ENCODE measurements at regions of chr1 and their contacts with region 1.

Region 1: GRCh38 chr1:41573785-41574713 is 89.6 kb upstream of the EDN2 start:
- DNase-seq: peak in 1 of 2 donors; percentile 85
- H3K4me3 ChIP-seq: no peak overlapping the region
- H3K27ac ChIP-seq: no peak overlapping the region
- H3K4me1 ChIP-seq: no peaks in the 10 kb centered on the region
- H3K27me3 ChIP-seq: no peaks in the 10 kb centered on the region
- CTCF ChIP-seq: peak; percentile 77 to 92 (median 84)

Region 2: DNA sequence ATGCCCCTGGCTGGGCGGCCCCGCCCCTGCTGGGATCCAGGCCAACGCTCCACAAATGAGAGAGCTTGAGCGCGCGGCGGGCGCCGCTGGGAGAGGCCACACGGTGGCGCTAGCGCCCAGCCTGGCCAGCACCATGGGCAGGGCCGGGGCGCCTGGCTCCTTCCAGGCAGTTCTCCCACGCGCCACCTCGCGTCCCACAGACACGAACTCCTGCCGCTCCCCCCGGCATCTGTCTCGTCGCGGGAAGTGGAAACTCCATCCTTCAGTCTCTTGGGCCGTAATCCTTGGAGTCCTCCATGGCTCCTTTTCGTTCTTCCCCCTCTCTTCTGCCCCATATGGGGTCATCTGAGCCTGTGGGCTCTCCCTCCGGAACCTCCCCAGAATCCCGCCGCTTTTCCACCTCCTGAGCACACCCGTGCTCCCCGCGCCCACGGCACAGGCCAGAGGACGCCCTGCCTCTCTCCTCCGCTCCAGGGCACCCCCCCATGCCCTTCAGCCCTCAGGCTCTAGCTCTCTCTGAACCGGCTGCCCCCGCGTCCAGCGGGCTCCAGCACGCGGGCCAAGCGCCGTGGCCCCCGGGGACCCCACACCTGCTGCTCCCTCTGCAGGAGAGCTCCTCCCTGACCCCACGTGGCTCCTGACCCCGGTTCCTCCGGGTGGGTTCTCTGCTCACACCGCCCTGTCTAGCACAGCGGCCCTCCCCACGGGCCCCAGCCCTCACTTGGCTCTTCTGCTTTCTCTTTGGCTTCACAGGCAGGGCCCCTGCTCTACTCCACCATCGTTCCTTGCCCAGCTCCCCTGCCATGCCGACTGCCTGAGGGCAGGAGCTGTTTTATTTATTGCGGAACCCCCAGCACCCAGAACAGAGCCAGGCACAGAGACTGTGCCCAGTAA is 57.6 kb before region 1 on chr1:
- intact Hi-C with region 1: loop called (anchors 2 kb)
- DNase-seq: peak; percentile 55 to 96
- H3K4me3 ChIP-seq: peak overlapping the region; percentile 40 to 69
- H3K27ac ChIP-seq: peak overlapping the region in 1 of 2 donors; percentile 40
- H3K4me1 ChIP-seq: peaks cover 3 to 7% of the 10 kb centered on the region in 2 donors
- H3K27me3 ChIP-seq: no peaks in the 10 kb centered on the region
- CTCF ChIP-seq: peak; percentile 88 to 96 (median 89)

Region 3: DNA sequence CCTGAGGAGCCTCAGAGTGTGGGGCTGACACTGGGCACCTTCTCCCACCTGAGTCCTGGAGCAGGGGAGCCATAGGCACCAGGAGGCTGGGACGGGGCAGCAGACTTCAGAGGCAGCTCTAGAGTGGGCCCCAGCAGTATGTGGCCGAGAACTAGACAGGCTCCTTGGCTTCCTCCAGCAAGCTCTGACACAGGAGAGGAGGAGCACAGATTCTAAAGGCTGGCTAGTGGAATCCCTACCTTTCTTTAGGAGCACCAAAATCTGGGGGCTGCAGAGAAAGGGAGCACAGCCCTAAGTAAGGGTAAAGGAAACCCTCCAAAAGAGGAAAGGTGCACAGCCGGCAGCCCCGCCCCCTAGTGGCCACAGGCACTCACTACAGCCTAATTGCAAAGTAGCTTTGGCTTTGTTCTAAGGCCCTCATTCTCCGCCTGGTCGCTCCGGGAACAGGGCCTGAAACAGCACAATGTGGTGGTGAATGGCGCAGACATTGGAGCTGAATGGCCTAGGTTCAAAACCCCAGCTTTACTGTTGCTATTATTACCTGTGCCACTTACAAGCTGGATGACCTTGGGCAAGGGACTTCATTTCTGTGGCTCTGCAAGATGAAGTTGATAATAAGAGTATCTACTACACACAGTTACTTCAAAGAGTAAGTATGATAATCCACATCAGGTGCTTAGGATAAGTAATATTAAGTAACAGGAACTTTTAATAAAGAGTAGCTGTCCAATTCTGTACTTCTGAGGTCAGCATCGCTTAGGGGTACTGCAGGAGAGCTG is 599.3 kb after region 1 on chr1:
- intact Hi-C with region 1: loop called (anchors 2 kb)
- DNase-seq: peak in 1 of 2 donors; percentile 74
- H3K4me3 ChIP-seq: no peak overlapping the region
- H3K27ac ChIP-seq: peak overlapping the region in 1 of 2 donors; percentile 7
- H3K4me1 ChIP-seq: peaks cover 0 to 19% of the 10 kb centered on the region in 2 donors
- H3K27me3 ChIP-seq: no peaks in the 10 kb centered on the region
- CTCF ChIP-seq: peak; percentile 70 to 94 (median 85)